B cell (primary cell): ENCODE measurements at regions of chr10 and their contacts with region 1.

Region 1: DNA sequence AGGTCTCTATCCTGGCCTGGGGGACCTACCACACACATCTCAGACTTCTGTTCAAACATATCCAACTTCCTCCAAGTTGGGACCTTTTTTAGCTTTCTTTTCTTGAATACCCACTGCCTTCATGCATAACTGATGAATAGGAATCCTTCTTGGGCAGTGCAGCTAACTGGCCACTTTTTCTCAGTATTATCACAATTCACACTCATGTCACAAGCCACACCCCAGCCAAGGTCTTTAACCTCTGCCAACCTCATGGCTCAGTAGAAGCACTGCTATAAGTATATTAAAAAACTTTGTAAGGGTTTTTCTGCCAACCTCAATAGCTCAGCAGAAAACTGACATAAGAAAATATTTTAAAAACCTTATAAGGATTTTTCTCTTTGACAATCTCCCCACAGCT is 44.5 kb downstream of the HHEX start:
- DNase-seq: no peak
- ATAC-seq: no peak
- H3K4me3 ChIP-seq: no peak overlapping the region
- H3K4me3 Mint-ChIP-seq: no peak overlapping the region
- H3K27ac ChIP-seq: no peak overlapping the region
- H3K27ac Mint-ChIP-seq: no peak overlapping the region
- H3K4me1 ChIP-seq: peaks cover 34 to 39% of the 10 kb centered on the region in 2 donors
- H3K4me1 Mint-ChIP-seq: peaks cover 51% of the 10 kb centered on the region
- H3K27me3 ChIP-seq: no peaks in the 10 kb centered on the region
- H3K27me3 Mint-ChIP-seq: no peaks in the 10 kb centered on the region
- CTCF ChIP-seq: no peak

Region 2: GRCh38 chr10:92124616-92125143 is 609.6 kb before region 1 on chr10:
- CTCF ChIA-PET with region 1: no interaction called
- POLR2A ChIA-PET with region 1: no interaction called
- intact Hi-C with region 1: no loop called
- DNase-seq: no peak
- ATAC-seq: no peak
- H3K4me3 ChIP-seq: no peak overlapping the region
- H3K4me3 Mint-ChIP-seq: no peak overlapping the region
- H3K27ac ChIP-seq: no peak overlapping the region
- H3K27ac Mint-ChIP-seq: no peak overlapping the region
- H3K4me1 ChIP-seq: peaks cover 0 to 6% of the 10 kb centered on the region in 2 donors
- H3K4me1 Mint-ChIP-seq: peaks cover 18% of the 10 kb centered on the region
- H3K27me3 ChIP-seq: no peaks in the 10 kb centered on the region
- H3K27me3 Mint-ChIP-seq: no peaks in the 10 kb centered on the region
- CTCF ChIP-seq: no peak

Region 3: GRCh38 chr10:92719991-92720830 is 14.1 kb before region 1 on chr10:
- CTCF ChIA-PET with region 1: interaction called, 11 read pairs
- POLR2A ChIA-PET with region 1: interaction called, 11 read pairs
- intact Hi-C with region 1: no loop called
- DNase-seq: no peak
- ATAC-seq: peak; percentile 39
- H3K4me3 ChIP-seq: no peak overlapping the region
- H3K4me3 Mint-ChIP-seq: peak overlapping the region; percentile 5
- H3K27ac ChIP-seq: peak overlapping the region in 1 of 2 donors; percentile 21
- H3K27ac Mint-ChIP-seq: no peak overlapping the region
- H3K4me1 ChIP-seq: peaks cover 48 to 50% of the 10 kb centered on the region in 2 donors
- H3K4me1 Mint-ChIP-seq: peaks cover 50% of the 10 kb centered on the region
- H3K27me3 ChIP-seq: no peaks in the 10 kb centered on the region
- H3K27me3 Mint-ChIP-seq: no peaks in the 10 kb centered on the region
- CTCF ChIP-seq: no peak